IMR-90 (cell line): ENCODE measurements at regions of chr5 and their contacts with region 1.

Region 1: DNA sequence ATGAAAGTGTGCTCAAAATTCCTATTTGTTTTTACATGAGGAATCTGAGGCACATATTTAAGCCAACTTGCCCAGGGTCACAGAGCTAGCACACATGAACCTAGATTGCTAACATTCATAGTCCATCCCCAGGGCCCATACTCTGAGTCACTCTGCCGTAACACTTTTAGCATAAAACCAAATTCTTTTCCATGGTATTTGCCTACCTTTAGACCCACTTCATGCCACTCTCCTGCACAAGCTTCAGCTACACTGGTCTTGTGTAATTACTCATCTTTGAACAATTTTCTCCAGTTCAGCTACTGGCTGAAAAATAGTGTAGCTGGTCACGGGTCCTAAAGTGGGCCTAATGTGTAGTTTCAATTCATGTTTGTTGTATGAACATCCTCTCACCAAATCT is 200.7 kb downstream of the SLC12A2 start:
- DNase-seq: no peak
- ATAC-seq: no peak
- H3K4me3 ChIP-seq: no peak overlapping the region
- H3K27ac ChIP-seq: no peak overlapping the region
- H3K4me1 ChIP-seq: no peaks in the 10 kb centered on the region
- H3K27me3 ChIP-seq: no peaks in the 10 kb centered on the region
- CTCF ChIP-seq: no peak
- POLR2A ChIP-seq: no peak
- RAD21 ChIP-seq: no peak

Region 2: GRCh38 chr5:127431977-127432585 is 852.2 kb before region 1 on chr5:
- CTCF ChIA-PET with region 1: no interaction called
- POLR2A ChIA-PET with region 1: no interaction called
- dilution Hi-C with region 1: no loop called
- in situ Hi-C with region 1: no loop called
- intact Hi-C with region 1: no loop called
- DNase-seq: no peak
- ATAC-seq: no peak
- H3K4me3 ChIP-seq: no peak overlapping the region
- H3K27ac ChIP-seq: no peak overlapping the region
- H3K4me1 ChIP-seq: no peaks in the 10 kb centered on the region
- H3K27me3 ChIP-seq: peaks cover 5% of the 10 kb centered on the region
- CTCF ChIP-seq: no peak
- POLR2A ChIP-seq: no peak
- RAD21 ChIP-seq: no peak

Region 3: GRCh38 chr5:127492854-127493738 is 791.1 kb before region 1 on chr5:
- CTCF ChIA-PET with region 1: no interaction called
- POLR2A ChIA-PET with region 1: no interaction called
- dilution Hi-C with region 1: no loop called
- in situ Hi-C with region 1: no loop called
- intact Hi-C with region 1: no loop called
- DNase-seq: peak; percentile 36
- ATAC-seq: peak; percentile 79
- H3K4me3 ChIP-seq: no peak overlapping the region
- H3K27ac ChIP-seq: no peak overlapping the region
- H3K4me1 ChIP-seq: no peaks in the 10 kb centered on the region
- H3K27me3 ChIP-seq: peaks cover 13% of the 10 kb centered on the region
- CTCF ChIP-seq: peak; percentile 70
- POLR2A ChIP-seq: no peak
- RAD21 ChIP-seq: peak; percentile 11; the same call in 1 of the 2 replicates

Region 4: DNA sequence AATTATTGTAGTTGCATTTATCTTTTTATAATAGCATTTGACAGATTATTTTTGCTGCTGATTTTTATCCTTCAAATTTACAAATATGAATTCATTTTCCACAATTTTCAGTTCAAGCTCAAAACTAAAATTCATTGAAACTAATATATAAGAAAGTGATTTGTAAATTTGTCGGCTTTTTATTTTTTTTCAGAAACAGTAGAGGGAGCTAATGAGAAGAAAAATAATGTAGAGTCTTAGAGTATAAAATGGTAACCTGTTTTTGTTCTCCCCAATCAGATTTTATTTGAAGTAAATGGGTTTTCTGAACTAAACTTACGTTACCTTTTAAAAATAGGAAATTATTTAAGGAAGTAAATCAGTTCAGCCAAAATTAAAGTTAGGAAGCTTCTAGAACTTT is 747.5 kb before region 1 on chr5:
- CTCF ChIA-PET with region 1: no interaction called
- POLR2A ChIA-PET with region 1: no interaction called
- dilution Hi-C with region 1: no loop called
- in situ Hi-C with region 1: no loop called
- intact Hi-C with region 1: loop called (anchors 10 kb)
- DNase-seq: peak; percentile 8
- ATAC-seq: no peak
- H3K4me3 ChIP-seq: no peak overlapping the region
- H3K27ac ChIP-seq: no peak overlapping the region
- H3K4me1 ChIP-seq: no peaks in the 10 kb centered on the region
- H3K27me3 ChIP-seq: no peaks in the 10 kb centered on the region
- CTCF ChIP-seq: peak; percentile 35; the same call in 1 of the 2 replicates
- POLR2A ChIP-seq: no peak
- RAD21 ChIP-seq: no peak

Region 5: DNA sequence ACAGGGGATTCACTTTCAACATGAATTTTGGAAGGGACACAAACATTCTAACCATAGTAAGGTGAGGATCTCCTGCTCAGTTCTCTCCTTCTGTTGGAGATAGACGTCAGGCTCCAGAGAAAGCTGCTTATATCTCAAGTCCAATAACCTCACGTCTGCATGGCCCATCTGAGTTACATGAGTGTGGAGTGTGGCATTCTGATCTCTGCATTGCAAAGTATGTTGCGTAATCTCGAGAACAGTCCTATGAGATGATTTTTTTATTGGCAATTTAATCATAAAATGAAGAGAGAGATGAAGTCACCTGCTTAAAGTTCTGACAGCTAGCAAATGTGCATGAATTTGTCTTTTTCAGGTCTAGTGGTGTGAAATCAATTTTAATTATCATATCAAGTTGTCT is 81.9 kb before region 1 on chr5:
- CTCF ChIA-PET with region 1: no interaction called
- POLR2A ChIA-PET with region 1: no interaction called
- dilution Hi-C with region 1: no loop called
- in situ Hi-C with region 1: no loop called
- intact Hi-C with region 1: no loop called
- DNase-seq: no peak
- ATAC-seq: no peak
- H3K4me3 ChIP-seq: no peak overlapping the region
- H3K27ac ChIP-seq: no peak overlapping the region
- H3K4me1 ChIP-seq: peaks cover 5% of the 10 kb centered on the region; the same call in 1 of the 2 replicates
- H3K27me3 ChIP-seq: peaks cover 2% of the 10 kb centered on the region
- CTCF ChIP-seq: no peak
- POLR2A ChIP-seq: no peak
- RAD21 ChIP-seq: no peak